ENCODE measurements at regions of chr22 and their contacts with region 1.

Region 1: DNA sequence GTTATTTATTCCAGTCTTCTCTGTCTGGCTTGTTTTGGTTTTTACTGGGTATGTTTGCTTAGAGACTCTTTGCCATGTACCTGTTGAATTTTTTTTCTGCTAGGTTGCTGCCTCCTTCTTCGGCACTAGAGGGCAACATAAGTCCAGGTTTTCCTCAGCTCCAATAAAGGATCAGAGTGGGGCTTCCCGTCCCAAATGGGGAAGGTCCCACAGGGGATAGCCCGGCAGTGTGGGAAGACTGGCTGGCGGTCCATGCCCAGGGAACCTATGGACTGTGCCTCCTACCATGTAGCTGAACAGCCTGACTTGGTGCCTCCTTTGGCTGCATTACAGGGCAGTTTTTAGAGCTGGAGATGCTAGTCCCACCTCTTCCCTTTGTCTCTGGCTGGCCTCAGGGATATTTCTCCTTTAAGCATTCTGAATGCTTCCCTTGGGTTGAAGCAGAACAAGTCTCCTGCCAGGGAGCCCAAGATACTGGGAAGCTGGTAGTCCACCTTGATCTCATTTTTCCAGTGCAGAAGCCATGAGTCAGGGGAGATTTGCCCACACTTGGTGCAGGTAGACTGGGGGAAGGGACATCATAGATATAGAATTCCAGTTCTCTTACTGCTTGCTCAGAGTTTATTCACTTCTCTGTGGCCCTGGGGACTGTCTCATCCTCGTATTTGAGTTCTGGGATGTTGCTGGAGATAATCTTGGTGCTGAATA is 60.2 kb downstream of the BRD1 start:
- DNase-seq: no peak
- H3K4me3 ChIP-seq: no peak overlapping the region
- H3K27ac ChIP-seq: no peak overlapping the region
- H3K4me1 ChIP-seq: peaks cover 0 to 13% (median 0%) of the 10 kb centered on the region in 3 donors
- H3K27me3 ChIP-seq: no peaks in the 10 kb centered on the region
- CTCF ChIP-seq: peak; percentile 25 to 78 (median 58)
- POLR2A ChIP-seq: no peak

Region 2: GRCh38 chr22:49609207-49609876 is 158.2 kb before region 1 on chr22:
- intact Hi-C with region 1: no loop called
- DNase-seq: no peak
- H3K4me3 ChIP-seq: no peak overlapping the region
- H3K27ac ChIP-seq: no peak overlapping the region
- H3K4me1 ChIP-seq: no peaks in the 10 kb centered on the region
- H3K27me3 ChIP-seq: no peaks in the 10 kb centered on the region
- CTCF ChIP-seq: no peak
- POLR2A ChIP-seq: no peak

Region 3: DNA sequence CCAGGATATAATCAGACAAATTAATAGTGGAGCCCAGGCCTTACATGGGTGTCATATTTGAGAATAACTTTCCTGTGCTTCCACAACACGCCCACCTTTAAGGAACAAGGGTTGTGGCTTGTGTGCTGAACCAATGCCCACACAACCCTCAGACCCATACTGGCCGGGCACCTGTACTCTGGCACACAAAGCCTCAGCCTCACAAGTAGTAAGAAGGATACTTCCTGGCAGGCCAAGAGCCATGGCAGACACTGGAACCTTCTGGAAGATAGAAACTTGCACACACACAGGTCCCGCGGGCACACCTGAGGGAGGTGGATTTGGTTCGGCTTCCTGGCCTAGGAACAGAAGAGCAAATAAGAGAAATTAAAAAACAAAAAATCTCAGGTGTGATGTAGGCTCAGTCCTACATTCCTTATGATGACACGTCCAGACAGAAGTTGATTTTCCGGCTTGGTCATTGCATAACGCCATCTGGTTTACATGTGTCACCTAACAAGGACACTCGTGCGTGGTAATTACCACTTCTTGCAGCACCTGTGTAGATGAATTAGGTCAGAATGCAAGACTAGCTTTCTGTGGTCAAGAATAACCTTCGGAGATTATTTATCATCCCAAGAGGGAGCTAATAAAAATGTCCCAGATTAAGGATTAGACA is 66.0 kb after region 1 on chr22:
- intact Hi-C with region 1: no loop called
- DNase-seq: no peak
- H3K4me3 ChIP-seq: no peak overlapping the region
- H3K27ac ChIP-seq: peak overlapping the region; percentile 59 to 84 (median 76)
- H3K4me1 ChIP-seq: peaks cover 0 to 37% (median 8%) of the 10 kb centered on the region in 3 donors
- H3K27me3 ChIP-seq: peaks cover 0 to 5% (median 0%) of the 10 kb centered on the region in 4 donors
- CTCF ChIP-seq: no peak
- POLR2A ChIP-seq: no peak

Region 4: DNA sequence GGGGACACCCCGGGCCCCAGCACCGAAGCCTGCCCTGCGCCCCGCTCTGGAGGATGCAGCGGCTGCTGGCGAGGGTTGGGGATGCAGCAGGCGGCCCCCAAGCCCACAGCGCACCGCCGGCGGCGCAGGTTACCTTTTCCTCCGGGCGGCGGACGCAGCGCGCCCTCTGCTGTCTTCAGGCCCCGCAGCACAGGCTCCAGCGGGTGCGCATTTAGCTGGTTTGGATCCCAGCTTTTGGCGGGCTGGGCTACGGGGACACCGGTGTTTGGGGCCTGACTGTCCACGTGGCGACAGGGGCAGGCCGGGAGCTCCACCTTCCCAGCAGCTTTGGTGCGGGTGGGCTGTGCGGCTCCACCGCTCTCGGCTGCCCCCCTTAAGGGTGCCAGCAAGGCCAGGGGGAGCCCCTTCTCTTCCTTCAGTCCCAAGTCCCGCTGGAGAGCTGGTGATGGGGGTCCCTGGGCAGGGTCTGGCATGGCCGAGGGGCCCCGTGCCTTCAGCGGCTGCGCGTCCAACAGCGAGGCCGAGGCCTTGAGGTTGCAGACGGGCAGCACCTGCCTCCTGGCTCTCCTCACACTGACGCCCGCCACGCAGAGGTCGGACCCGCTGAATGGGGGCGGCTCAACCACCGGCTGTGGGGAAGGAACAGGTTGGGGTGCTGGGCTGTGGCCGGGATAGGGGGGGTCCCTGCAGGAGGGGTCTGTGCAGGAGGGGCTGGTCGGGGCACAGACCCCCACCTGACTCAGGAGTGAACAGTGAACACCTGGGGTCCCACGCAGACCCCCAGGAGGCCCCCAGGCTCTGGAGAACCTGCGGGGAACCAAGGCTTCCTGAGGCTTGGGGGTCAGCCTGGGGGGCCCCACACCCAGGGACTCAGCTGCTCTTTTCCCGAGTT is 263.0 kb after region 1 on chr22:
- intact Hi-C with region 1: loop called (anchors 10 kb)
- DNase-seq: no peak
- H3K4me3 ChIP-seq: no peak overlapping the region
- H3K27ac ChIP-seq: no peak overlapping the region
- H3K4me1 ChIP-seq: peaks cover 5 to 24% (median 14%) of the 10 kb centered on the region in 3 donors
- H3K27me3 ChIP-seq: peaks cover 0 to 88% (median 0%) of the 10 kb centered on the region in 4 donors
- CTCF ChIP-seq: peak; percentile 72 to 94 (median 86)
- POLR2A ChIP-seq: no peak